A673 (cell line): ENCODE measurements at regions of chr3 and their contacts with region 1.

Region 1: DNA sequence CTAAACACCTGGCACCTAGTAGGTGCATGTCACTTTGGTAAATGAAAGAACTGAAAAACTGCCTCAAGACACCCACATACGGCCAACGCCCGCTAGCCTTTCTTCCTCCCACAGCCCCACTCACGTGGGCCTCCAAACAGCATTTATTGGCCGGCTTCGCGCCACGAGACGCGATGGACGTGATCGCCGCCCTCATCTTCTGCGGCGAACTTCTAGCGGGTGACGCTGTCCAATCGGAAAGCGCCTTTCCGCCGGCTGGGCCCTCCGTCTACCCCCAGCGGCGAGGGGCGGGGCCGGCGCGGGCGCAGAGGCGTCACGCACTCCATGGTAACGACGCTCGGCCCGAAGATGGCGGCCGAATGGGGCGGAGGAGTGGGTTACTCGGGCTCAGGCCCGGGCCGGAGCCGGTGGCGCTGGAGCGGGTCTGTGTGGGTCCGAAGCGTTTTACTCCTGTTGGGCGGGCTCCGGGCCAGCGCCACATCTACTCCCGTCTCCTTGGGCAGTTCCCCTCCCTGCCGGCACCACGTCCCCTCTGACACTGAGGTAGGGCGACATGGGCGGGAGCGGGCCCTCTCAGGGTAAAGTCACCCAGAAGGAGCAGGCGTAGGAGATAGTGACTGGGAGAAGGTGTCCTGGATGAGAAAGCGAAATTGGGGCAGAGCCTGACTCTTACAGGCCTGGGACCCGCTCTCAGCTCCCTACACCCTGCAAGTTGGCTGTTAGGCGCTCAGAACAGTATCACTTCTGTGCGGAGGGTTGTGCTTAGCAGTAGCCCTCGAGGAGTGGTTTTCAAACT is at the start of gene LMLN:
- DNase-seq: peak; percentile 98
- H3K4me3 ChIP-seq: peak within 1 kb of the TSS; percentile 75
- H3K27ac ChIP-seq: peak within 1 kb of the TSS; percentile 83
- H3K4me1 ChIP-seq: peaks cover 40% of the 10 kb centered on the region
- H3K27me3 ChIP-seq: no peaks in the 10 kb centered on the region
- CTCF ChIP-seq: no peak
- total RNA-seq, gene LMLN: 15.9 and 17.4 TPM in 2 replicates

Region 2: DNA sequence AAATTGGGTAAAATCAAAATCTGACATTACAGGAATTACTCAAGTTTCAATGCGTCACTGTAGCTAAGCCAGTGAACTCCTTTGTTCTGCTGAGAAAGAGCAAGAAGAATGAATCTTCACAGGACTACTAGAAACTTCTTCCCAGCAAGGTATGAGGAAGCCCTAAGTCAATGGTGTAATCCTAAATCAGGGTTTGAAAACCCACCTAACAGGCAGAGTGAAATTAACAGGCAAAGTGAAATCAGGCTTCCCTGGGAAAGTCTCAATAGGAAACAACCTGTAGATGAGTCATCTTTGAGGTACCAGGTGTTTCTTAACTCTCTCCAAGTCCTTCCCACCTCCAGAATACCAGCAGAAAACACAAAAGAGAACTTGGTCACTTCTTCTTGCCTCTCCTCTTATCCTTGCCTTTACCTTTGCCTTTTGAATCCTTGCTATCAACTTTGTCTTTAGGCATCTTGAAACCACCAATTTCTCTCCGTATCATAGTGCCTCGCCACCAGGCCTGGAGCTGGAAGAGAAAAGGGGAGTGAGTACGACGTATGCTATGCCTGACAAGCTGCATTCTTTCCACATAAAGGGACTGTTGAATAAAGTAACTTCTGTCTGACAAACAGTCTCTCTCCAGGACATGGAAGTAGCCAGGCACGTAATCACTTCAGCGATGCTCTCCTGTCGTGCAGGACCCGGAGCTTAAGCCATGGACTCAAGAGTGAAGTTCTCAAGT is 70.7 kb before region 1 on chr3:
- CTCF ChIA-PET with region 1: no interaction called
- POLR2A ChIA-PET with region 1: no interaction called
- intact Hi-C with region 1: no loop called
- DNase-seq: no peak
- H3K4me3 ChIP-seq: no peak overlapping the region
- H3K27ac ChIP-seq: no peak overlapping the region
- H3K4me1 ChIP-seq: no peaks in the 10 kb centered on the region
- H3K27me3 ChIP-seq: no peaks in the 10 kb centered on the region
- CTCF ChIP-seq: no peak

Region 3: GRCh38 chr3:198080521-198081280 is 120.6 kb after region 1 on chr3:
- CTCF ChIA-PET with region 1: no interaction called
- POLR2A ChIA-PET with region 1: no interaction called
- intact Hi-C with region 1: loop called (anchors 10 kb)
- DNase-seq: peak; percentile 86
- H3K4me3 ChIP-seq: peak overlapping the region; percentile 80
- H3K27ac ChIP-seq: peak overlapping the region; percentile 79
- H3K4me1 ChIP-seq: no peaks in the 10 kb centered on the region
- H3K27me3 ChIP-seq: peaks cover 10% of the 10 kb centered on the region
- CTCF ChIP-seq: peak; percentile 41

Region 4: GRCh38 chr3:198107840-198108734 is 148.0 kb after region 1 on chr3:
- CTCF ChIA-PET with region 1: no interaction called
- POLR2A ChIA-PET with region 1: interaction called, 10 read pairs
- intact Hi-C with region 1: no loop called
- DNase-seq: peak; percentile 95
- H3K4me3 ChIP-seq: no peak overlapping the region
- H3K27ac ChIP-seq: peak overlapping the region; percentile 100
- H3K4me1 ChIP-seq: peaks cover 40% of the 10 kb centered on the region
- H3K27me3 ChIP-seq: no peaks in the 10 kb centered on the region
- CTCF ChIP-seq: no peak